Gastrocnemius medialis (tissue), 4 donors: ENCODE measurements at regions of chr12 and their contacts with region 1.

Region 1: DNA sequence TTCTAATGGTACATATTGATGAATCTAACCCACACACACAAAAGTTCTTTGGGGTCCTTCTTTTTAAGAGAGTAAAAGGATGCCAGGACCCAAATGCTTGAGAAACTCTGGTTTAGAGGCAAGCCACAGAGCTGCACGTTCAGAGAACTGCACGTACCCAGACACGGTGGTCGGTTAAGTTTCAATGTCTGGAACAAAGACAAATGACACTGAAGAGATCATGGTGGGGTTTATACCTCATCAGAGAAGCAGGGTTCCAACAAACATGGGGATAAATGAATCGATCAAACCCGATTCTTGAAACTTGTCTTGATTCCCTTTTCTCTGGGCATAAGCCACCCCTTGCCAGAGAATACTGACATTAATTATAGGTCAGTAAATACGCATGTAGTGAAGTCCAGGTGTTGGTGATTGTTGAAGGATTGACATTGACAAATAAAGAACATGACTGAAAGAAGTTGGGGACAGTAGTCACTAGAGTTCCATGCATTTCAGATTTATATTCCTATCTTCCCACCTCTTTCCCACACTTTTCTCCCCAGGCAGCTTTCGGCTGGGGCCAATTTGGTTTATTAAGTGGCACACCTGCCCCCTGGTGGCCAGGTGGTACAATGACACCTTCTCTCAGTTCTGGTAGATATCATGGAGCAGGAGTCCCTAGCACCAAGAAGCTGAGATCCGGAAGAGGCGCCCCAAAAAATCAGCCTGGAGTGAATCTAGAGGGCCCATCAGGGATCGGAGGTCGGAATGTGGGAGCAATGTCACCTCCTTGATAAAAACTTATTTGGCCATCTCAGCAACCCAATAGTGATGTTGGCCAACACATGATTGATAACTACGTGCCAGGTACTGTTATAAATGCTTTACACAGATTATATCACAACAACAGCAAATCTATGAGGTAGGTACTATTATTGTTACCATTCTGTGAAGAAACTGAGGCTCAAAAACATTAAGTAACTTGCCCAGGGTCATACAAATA is 17.8 kb upstream of the HDAC7 start:
- DNase-seq: peak in 1 of 2 donors; percentile 56
- ATAC-seq: peak; percentile 68 to 84
- H3K4me3 ChIP-seq: no peak overlapping the region
- H3K27ac ChIP-seq: no peak overlapping the region
- H3K4me1 ChIP-seq: peaks cover 17 to 28% of the 10 kb centered on the region in 2 donors
- H3K27me3 ChIP-seq: no peaks in the 10 kb centered on the region
- CTCF ChIP-seq: peak; percentile 90 to 95 (median 92)
- POLR2A ChIP-seq: no peak

Region 2: DNA sequence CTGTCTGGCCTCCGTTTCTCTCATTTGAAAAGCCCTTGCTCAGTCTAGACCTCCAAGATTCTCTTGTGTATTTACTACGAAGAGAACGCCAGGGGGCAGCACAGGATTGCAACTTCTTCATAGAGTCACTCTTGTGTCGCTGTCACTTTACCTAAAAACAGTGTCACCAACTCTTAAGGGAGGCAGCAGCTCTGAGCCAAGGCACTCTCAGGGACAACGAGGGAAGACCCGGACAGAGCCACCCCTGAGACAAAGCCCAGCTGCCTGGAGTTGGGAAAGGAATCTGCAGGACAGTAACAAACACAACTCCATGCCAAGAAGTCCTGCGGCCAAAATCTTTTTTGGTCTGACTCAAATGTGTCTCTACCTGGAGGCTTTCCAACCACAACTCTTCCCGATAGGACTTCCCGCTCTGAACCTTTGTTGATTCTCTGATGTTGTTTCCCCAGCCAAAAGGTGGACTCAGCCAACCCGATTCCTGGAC is 122.0 kb before region 1 on chr12:
- in situ Hi-C with region 1: loop called in 2 of 4 experiments (anchors 5 to 10 kb)
- intact Hi-C with region 1: loop called (anchors 1 kb)
- DNase-seq: peak; percentile 74 to 82
- ATAC-seq: peak; percentile 71 to 77
- H3K4me3 ChIP-seq: peak overlapping the region in 2 of 4 donors; percentile 5 to 6
- H3K27ac ChIP-seq: peak overlapping the region; percentile 62 to 85 (median 80)
- H3K4me1 ChIP-seq: peaks cover 32 to 48% of the 10 kb centered on the region in 2 donors
- H3K27me3 ChIP-seq: no peaks in the 10 kb centered on the region
- CTCF ChIP-seq: peak; percentile 82 to 91 (median 86)
- POLR2A ChIP-seq: no peak

Region 3: DNA sequence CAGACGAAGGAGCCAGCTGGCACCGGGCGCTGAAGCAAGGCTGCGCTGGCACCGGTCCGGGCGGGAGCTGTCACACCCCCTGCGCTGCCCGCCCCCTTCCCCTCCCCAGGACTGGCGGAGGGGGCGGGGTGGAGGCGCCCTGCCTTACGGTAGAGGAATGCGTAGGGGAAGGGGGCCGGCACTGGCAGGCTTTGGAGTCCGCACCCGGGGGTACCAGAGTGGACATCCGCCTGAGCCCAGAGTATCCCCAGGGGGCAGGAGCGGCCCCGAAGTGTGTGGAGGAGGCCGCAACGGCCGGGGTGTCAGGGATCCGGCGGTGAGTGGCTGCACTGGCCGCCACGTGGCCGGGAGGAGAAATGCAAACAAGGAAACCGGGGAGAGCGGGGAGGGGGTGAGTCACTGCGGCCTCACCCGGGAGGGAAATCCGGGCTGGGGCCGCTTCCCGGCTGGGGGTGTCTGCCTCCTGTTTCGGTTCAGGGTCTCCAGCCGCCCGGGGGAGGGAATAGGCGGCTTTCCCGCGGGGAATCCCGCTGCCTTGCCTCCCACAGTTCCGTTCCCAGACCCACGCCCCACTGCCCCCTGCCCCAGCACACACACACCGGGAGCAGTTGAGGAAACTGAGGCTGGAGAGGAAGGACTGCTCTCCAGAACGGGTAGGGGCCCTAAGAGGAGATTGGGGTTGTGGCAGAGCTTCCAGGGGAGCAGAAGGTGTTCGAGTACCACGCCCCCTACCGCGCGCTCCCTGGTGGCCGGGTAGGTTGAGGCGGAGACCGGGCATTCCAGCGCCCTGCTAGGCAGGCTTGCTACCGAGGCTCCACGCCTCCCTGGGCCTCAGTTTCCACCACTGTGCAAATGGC is 78.4 kb before region 1 on chr12 and contains the start of gene RAPGEF3:
- in situ Hi-C with region 1: no loop called
- intact Hi-C with region 1: no loop called
- DNase-seq: peak; percentile 66 to 73
- ATAC-seq: peak; percentile 89
- H3K4me3 ChIP-seq: peak within 1 kb of the TSS; percentile 62 to 91 (median 72)
- H3K27ac ChIP-seq: peak within 1 kb of the TSS; percentile 50 to 90 (median 78)
- H3K4me1 ChIP-seq: peaks cover 16 to 21% of the 10 kb centered on the region in 2 donors
- H3K27me3 ChIP-seq: no peaks in the 10 kb centered on the region
- CTCF ChIP-seq: peak; percentile 28 to 70 (median 63)
- POLR2A ChIP-seq: peak; percentile 7 to 19
- total RNA-seq, gene RAPGEF3: 17.0 to 27.0 (median 22.3) TPM

Region 4: GRCh38 chr12:47773062-47773857 is 64.2 kb before region 1 on chr12 and contains the start of gene SLC48A1:
- in situ Hi-C with region 1: loop called in 1 of 4 experiments (anchors 5 kb)
- intact Hi-C with region 1: loop called (anchors 2 kb)
- DNase-seq: peak; percentile 54 to 58
- ATAC-seq: peak; percentile 81 to 82
- H3K4me3 ChIP-seq: peak within 1 kb of the TSS; percentile 70 to 97 (median 79)
- H3K27ac ChIP-seq: peak within 1 kb of the TSS; percentile 76 to 93 (median 90)
- H3K4me1 ChIP-seq: peaks cover 46 to 55% of the 10 kb centered on the region in 2 donors
- H3K27me3 ChIP-seq: no peaks in the 10 kb centered on the region
- CTCF ChIP-seq: peak; percentile 20 to 66 (median 28)
- POLR2A ChIP-seq: peak; percentile 59 to 71
- total RNA-seq, gene SLC48A1: 28.3 to 62.6 (median 45.6) TPM

Region 5: GRCh38 chr12:47785036-47785886 is 52.2 kb before region 1 on chr12:
- in situ Hi-C with region 1: loop called in 2 of 4 experiments (anchors 5 to 10 kb)
- intact Hi-C with region 1: no loop called
- DNase-seq: no peak
- ATAC-seq: no peak
- H3K4me3 ChIP-seq: no peak overlapping the region
- H3K27ac ChIP-seq: peak overlapping the region in 1 of 4 donors; percentile 26
- H3K4me1 ChIP-seq: peaks cover 0 to 3% of the 10 kb centered on the region in 2 donors
- H3K27me3 ChIP-seq: no peaks in the 10 kb centered on the region
- CTCF ChIP-seq: no peak
- POLR2A ChIP-seq: no peak

Region 6: DNA sequence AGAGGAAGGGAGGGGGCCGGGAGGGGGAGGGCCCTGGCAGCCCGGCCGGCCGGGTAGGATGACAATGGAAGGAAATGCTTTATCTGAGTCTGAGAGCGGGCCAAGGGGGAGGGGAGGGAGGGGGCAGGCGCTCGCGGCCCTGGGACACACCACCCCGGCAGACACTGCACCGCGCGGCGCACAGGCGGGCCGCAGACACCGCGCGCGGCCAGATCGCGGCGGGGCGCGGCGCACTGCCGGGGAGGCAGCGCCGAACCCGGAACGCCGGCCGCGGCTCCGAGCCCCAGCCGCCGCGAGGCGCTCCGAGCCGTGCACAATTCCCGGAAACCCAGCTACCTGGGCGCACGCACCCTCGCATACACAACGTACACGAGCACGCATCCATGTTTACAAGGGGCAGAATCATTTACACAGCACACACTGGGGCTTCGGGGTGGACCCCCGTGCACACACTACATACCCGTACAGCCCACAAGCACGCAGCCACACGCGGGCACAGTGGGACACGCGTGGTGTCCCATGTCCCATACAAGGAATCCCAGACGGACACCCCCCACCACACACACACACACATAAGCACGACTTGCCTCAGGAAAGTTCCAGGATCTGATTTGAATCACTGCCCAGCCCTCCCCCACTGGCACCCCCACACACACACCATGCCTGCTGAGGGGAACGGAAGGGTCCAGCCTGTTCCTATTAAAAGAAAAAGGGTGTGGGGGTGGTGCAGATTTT is 17.4 kb before region 1 on chr12 and contains the start of gene HDAC7:
- in situ Hi-C with region 1: no loop called
- intact Hi-C with region 1: loop called (anchors 1 kb)
- DNase-seq: peak; percentile 76 to 85
- ATAC-seq: peak; percentile 68 to 74
- H3K4me3 ChIP-seq: peak within 1 kb of the TSS; percentile 69 to 89 (median 81)
- H3K27ac ChIP-seq: peak within 1 kb of the TSS; percentile 85 to 94 (median 92)
- H3K4me1 ChIP-seq: peaks cover 62 to 81% of the 10 kb centered on the region in 2 donors
- H3K27me3 ChIP-seq: no peaks in the 10 kb centered on the region
- CTCF ChIP-seq: peak in 2 of 5 experiments; percentile 16 to 23
- POLR2A ChIP-seq: peak; percentile 64 to 68
- total RNA-seq, gene HDAC7: 12.2 to 27.1 (median 17.0) TPM